ENCODE measurements at regions of chr6 and their contacts with region 1.

Region 1: GRCh38 chr6:137707590-137708360 is 159.3 kb upstream of the TNFAIP3 start:
- DNase-seq: no peak
- H3K4me3 ChIP-seq: no peak overlapping the region
- H3K27ac ChIP-seq: no peak overlapping the region
- H3K4me1 ChIP-seq: no peaks in the 10 kb centered on the region
- H3K27me3 ChIP-seq: no peaks in the 10 kb centered on the region
- CTCF ChIP-seq: peak; percentile 34 to 72 (median 69)
- EP300 ChIP-seq: no peak
- POLR2A ChIP-seq: no peak
- RAD21 ChIP-seq: peak; percentile 87 to 88

Region 2: GRCh38 chr6:137637121-137637520 is 70.7 kb before region 1 on chr6:
- CTCF ChIA-PET with region 1: no interaction called
- POLR2A ChIA-PET with region 1: no interaction called
- DNase-seq: no peak
- H3K4me3 ChIP-seq: no peak overlapping the region
- H3K27ac ChIP-seq: no peak overlapping the region
- H3K4me1 ChIP-seq: no peaks in the 10 kb centered on the region
- H3K27me3 ChIP-seq: no peaks in the 10 kb centered on the region
- CTCF ChIP-seq: no peak
- EP300 ChIP-seq: no peak
- POLR2A ChIP-seq: no peak
- RAD21 ChIP-seq: no peak

Region 3: DNA sequence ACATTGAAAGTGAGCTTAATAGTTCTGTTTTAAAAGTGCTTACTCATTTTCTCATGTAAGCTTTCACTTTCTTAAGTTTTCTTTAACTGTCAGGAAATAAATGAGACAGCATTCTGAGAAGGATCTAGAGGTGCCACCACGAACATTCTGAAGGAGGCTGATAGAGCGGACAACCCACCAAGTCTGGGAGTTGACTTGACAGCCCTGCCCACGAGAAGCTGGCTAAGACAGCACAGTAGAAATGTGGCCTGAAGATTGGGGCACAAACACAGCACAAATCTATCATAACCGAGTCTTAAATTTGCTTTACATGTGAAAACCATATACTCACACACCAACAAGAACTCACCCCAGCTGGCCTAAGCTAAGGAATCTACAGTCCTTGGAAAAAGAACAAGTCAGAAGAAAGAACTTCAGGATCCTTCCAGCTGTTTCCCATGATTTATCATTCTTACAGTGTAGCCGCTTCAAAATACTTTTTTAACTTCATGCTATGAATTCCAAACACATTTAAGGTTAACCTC is 15.0 kb after region 1 on chr6:
- CTCF ChIA-PET with region 1: interaction called, 16 read pairs
- POLR2A ChIA-PET with region 1: no interaction called
- DNase-seq: no peak
- H3K4me3 ChIP-seq: no peak overlapping the region
- H3K27ac ChIP-seq: no peak overlapping the region
- H3K4me1 ChIP-seq: no peaks in the 10 kb centered on the region
- H3K27me3 ChIP-seq: no peaks in the 10 kb centered on the region
- CTCF ChIP-seq: no peak
- EP300 ChIP-seq: no peak
- POLR2A ChIP-seq: no peak
- RAD21 ChIP-seq: no peak

Region 4: GRCh38 chr6:137866914-137867684 is 159.3 kb after region 1 on chr6 and contains the start of gene TNFAIP3:
- CTCF ChIA-PET with region 1: interaction called, 13 read pairs
- POLR2A ChIA-PET with region 1: no interaction called
- DNase-seq: peak; percentile 50 to 88
- H3K4me3 ChIP-seq: peak within 1 kb of the TSS; percentile 46 to 88 (median 84)
- H3K27ac ChIP-seq: no peak within 1 kb of the TSS
- H3K4me1 ChIP-seq: peaks cover 5 to 17% (median 9%) of the 10 kb centered on the region in 4 experiments
- H3K27me3 ChIP-seq: peaks cover 0 to 16% (median 8%) of the 10 kb centered on the region in 4 experiments; a peak in 5 of 7 replicates
- CTCF ChIP-seq: peak; percentile 72 to 82 (median 73)
- EP300 ChIP-seq: peak in 1 of 2 experiments; percentile 52; a peak in 1 of 3 replicates
- POLR2A ChIP-seq: no peak; a peak in 1 of 3 replicates
- RAD21 ChIP-seq: peak; percentile 41 to 70
- total RNA-seq, gene TNFAIP3: 1.6 and 2.2 TPM in 2 replicates

Region 5: DNA sequence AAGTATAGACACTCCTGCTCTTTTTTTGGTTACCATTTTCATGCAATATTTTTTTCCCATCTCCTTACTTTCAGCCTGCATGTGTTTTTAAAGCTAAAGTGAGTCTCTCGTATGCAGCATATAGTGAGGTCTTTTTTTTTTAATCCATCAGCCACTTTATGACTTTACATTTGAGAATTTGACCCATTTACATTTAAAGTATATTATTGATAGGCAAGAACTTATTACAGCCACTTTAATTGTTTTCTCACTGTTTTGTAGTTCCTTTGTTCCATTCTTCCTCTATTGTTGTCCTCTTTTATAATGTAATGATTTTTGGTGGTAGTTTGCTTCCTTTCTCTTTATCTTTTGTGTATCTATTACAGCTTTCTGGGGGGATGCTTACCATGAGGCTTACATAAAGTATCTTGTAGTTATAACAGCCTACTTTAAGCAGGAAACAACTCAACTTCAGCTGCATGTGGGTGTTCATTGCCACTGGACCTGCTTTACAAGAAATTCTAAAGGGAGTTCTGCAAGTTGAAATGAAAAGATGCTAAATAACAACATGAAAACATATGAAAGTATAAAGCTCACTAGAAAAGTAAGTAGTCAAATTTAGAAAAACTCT is 231.1 kb after region 1 on chr6:
- CTCF ChIA-PET with region 1: interaction called, 42 read pairs
- POLR2A ChIA-PET with region 1: no interaction called
- DNase-seq: no peak
- H3K4me3 ChIP-seq: no peak overlapping the region
- H3K27ac ChIP-seq: no peak overlapping the region
- H3K4me1 ChIP-seq: no peaks in the 10 kb centered on the region
- H3K27me3 ChIP-seq: no peaks in the 10 kb centered on the region
- CTCF ChIP-seq: no peak
- EP300 ChIP-seq: no peak
- POLR2A ChIP-seq: no peak
- RAD21 ChIP-seq: no peak

Region 6: DNA sequence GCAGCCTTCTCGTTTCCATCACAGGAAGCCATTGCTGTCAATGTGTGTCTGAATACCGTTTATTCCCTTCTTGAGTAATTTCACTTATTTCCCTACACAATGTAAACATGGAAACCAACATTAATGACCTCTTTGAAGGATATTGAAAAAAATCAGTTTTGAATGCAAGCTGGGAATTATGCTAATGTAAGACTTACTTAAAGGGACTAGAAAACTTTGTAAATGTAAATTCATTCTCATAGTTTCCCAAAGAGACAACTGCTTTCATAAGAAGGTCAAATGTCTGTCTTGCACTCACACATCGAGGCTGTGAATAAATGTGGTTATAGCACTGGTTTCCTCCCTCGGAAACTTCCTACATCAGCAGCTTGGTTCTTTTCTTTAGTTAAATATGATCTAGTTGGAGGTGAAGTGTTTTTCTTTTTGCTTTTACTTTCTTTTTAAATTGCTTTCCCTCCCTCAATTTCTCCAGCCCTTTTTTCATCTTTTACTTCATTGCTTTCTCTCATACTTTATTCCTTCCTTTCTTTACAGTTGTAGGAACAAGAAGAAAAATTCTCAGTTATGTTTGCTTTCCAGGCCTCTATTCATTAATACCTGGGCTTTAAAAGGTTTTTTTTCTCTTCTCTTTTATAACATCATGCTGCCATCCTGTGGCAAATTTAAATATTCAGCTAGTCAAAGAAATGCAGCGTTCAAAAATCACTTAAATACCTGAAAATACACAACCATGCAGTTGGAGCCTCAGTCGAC is 267.6 kb after region 1 on chr6:
- CTCF ChIA-PET with region 1: interaction called, 12 read pairs
- POLR2A ChIA-PET with region 1: no interaction called
- DNase-seq: no peak
- H3K4me3 ChIP-seq: no peak overlapping the region
- H3K27ac ChIP-seq: no peak overlapping the region
- H3K4me1 ChIP-seq: no peaks in the 10 kb centered on the region
- H3K27me3 ChIP-seq: no peaks in the 10 kb centered on the region
- CTCF ChIP-seq: no peak; a peak in 1 of 4 replicates
- EP300 ChIP-seq: no peak
- POLR2A ChIP-seq: no peak
- RAD21 ChIP-seq: peak; percentile 33 to 49

Region 7: GRCh38 chr6:138007014-138007472 is 299.3 kb after region 1 on chr6:
- CTCF ChIA-PET with region 1: interaction called, 19 read pairs
- POLR2A ChIA-PET with region 1: no interaction called
- DNase-seq: peak; percentile 36 to 75
- H3K4me3 ChIP-seq: no peak overlapping the region
- H3K27ac ChIP-seq: no peak overlapping the region
- H3K4me1 ChIP-seq: peaks cover 0 to 5% (median 3%) of the 10 kb centered on the region in 4 experiments; a peak in 4 of 7 replicates
- H3K27me3 ChIP-seq: no peaks in the 10 kb centered on the region
- CTCF ChIP-seq: peak; percentile 60 to 81 (median 73)
- EP300 ChIP-seq: no peak
- POLR2A ChIP-seq: no peak
- RAD21 ChIP-seq: peak; percentile 58 to 70

Measured in H1 (cell line).